ENCODE measurements at regions of chr3 and their contacts with region 1.

Region 1: GRCh38 chr3:24128195-24129005 is 183.3 kb downstream of the NR1D2 start:
- DNase-seq: peak; percentile 19 to 76
- H3K4me3 ChIP-seq: no peak overlapping the region
- H3K27ac ChIP-seq: peak overlapping the region; percentile 49
- H3K4me1 ChIP-seq: peaks cover 23% of the 10 kb centered on the region
- H3K27me3 ChIP-seq: no peaks in the 10 kb centered on the region
- CTCF ChIP-seq: no peak

Region 2: GRCh38 chr3:24047513-24047912 is 80.9 kb before region 1 on chr3:
- CTCF ChIA-PET with region 1: no interaction called
- POLR2A ChIA-PET with region 1: no interaction called
- intact Hi-C with region 1: loop called (anchors 1 kb)
- DNase-seq: no peak
- H3K4me3 ChIP-seq: no peak overlapping the region
- H3K27ac ChIP-seq: peak overlapping the region; percentile 70
- H3K4me1 ChIP-seq: peaks cover 16% of the 10 kb centered on the region
- H3K27me3 ChIP-seq: no peaks in the 10 kb centered on the region
- CTCF ChIP-seq: no peak

Region 3: GRCh38 chr3:24145981-24146822 is 17.8 kb after region 1 on chr3:
- CTCF ChIA-PET with region 1: no interaction called
- POLR2A ChIA-PET with region 1: no interaction called
- intact Hi-C with region 1: loop called (anchors 2 kb)
- DNase-seq: peak; percentile 52 to 84
- H3K4me3 ChIP-seq: no peak overlapping the region
- H3K27ac ChIP-seq: peak overlapping the region; percentile 85
- H3K4me1 ChIP-seq: peaks cover 44% of the 10 kb centered on the region
- H3K27me3 ChIP-seq: no peaks in the 10 kb centered on the region
- CTCF ChIP-seq: no peak

Measured in PC-9 (cell line).